Activated naive CD4-positive, alpha-beta T cell treated with anti-CD3 and anti-CD28 coated beads for 36 hours (primary cell): ENCODE measurements at regions of chr4 and their contacts with region 1.

Region 1: GRCh38 chr4:139030614-139031235 is 15.1 kb downstream of the NOCT start:
- DNase-seq: peak; percentile 90
- H3K4me3 Mint-ChIP-seq: no peak overlapping the region
- H3K27ac Mint-ChIP-seq: no peak overlapping the region
- H3K4me1 Mint-ChIP-seq: peaks cover 11% of the 10 kb centered on the region
- H3K27me3 Mint-ChIP-seq: no peaks in the 10 kb centered on the region

Region 2: DNA sequence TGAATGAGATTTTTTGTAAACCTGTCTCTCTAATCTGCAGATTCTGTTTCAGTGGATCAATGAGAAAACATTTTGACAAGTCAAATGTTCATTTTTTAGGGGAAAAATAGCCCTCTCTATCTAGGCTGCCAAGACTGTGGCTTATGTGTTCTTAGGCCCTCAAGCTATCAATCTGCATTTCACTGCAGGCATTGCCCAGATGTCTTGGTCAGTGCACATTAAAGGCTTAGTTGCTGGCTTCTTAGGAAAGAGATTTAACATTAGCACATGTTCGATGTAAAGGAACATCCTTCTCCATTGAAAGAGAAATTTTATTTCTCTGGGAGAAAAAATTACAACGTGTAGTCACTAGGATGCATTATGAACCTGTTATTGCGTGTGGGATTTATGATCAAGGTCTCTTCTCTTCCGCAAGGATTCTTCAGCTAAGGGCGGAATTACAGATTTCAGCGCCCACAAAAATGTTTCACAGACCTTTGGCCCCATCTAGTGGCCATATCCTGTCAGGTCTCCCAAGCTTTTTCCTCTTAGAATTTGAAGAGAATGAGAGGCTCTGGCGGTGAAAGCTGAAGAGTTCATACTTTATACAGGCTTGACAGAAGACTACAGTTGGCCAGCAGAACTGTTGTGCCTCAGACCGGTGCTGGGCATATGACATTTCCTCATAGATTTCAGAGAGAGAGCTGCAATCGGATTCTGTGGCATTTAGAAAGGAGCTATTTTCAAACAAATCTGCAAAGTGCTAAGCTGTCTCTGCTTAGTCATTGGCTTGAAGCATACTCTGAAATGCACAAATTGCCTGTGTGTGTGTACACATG is 159.8 kb before region 1 on chr4:
- CTCF ChIA-PET with region 1: no interaction called
- intact Hi-C with region 1: no loop called
- DNase-seq: peak; percentile 69
- H3K4me3 Mint-ChIP-seq: no peak overlapping the region
- H3K27ac Mint-ChIP-seq: no peak overlapping the region
- H3K4me1 Mint-ChIP-seq: no peaks in the 10 kb centered on the region
- H3K27me3 Mint-ChIP-seq: peaks cover 9% of the 10 kb centered on the region

Region 3: DNA sequence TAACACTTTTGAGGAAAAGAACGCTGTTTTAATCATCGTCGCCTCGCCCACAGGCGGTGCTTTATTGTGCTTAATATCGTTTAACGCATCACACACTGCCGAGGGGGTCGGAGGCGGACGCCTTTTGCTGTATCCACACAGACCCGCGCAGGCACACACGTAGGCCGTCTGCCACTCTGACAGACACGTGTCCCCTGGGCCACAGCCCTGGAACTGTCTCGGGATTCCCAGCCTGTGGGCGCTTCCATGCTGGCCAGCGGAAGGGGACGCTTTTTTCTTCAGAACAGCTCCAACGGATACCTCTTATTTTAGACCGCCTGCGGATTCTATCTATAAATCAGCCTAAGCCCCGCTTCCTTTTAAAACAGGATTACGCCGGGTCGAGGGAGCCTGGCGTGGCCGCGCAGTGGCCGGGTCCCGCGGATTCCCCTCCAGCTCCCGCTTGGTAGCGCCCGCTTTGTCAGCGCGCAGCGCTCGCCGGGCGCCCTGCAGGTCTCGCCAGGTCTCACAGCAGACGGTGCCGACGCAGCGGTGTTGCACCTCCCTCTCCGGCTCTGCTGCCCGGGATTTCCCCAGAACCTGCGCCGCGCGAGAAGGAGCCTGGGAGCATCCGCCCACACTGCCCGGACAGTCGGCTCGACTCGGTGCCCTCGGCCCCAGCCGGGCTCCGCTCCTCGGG is 15.3 kb before region 1 on chr4 and contains the start of gene NOCT:
- CTCF ChIA-PET with region 1: interaction called, 86 read pairs
- intact Hi-C with region 1: no loop called
- DNase-seq: peak; percentile 97
- H3K4me3 Mint-ChIP-seq: peak within 1 kb of the TSS; percentile 91
- H3K27ac Mint-ChIP-seq: peak within 1 kb of the TSS; percentile 96
- H3K4me1 Mint-ChIP-seq: peaks cover 48% of the 10 kb centered on the region
- H3K27me3 Mint-ChIP-seq: no peaks in the 10 kb centered on the region
- total RNA-seq, gene NOCT: 9.3 to 10.4 TPM

Region 4: DNA sequence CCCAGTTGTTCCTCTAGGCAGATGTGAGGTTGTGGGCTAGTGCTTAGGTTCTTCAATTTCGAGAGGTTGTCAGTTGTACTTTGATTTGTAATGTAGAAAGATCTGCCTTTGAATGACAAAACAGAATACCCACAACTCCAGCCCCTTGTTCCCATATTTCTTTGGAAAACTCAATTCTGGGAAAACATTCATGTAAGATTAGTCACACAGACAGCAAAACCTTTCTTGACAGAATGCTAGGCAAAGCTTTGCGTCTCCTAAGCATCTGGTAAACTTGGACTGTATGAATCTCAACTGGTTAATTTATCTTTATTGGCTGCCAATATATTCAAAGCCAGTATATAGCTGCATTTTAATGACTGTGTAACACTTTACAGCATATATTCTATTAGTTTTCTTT is 19.7 kb after region 1 on chr4:
- CTCF ChIA-PET with region 1: interaction called, 35 read pairs
- intact Hi-C with region 1: no loop called
- DNase-seq: no peak
- H3K4me3 Mint-ChIP-seq: no peak overlapping the region
- H3K27ac Mint-ChIP-seq: no peak overlapping the region
- H3K4me1 Mint-ChIP-seq: peaks cover 8% of the 10 kb centered on the region
- H3K27me3 Mint-ChIP-seq: no peaks in the 10 kb centered on the region

Region 5: DNA sequence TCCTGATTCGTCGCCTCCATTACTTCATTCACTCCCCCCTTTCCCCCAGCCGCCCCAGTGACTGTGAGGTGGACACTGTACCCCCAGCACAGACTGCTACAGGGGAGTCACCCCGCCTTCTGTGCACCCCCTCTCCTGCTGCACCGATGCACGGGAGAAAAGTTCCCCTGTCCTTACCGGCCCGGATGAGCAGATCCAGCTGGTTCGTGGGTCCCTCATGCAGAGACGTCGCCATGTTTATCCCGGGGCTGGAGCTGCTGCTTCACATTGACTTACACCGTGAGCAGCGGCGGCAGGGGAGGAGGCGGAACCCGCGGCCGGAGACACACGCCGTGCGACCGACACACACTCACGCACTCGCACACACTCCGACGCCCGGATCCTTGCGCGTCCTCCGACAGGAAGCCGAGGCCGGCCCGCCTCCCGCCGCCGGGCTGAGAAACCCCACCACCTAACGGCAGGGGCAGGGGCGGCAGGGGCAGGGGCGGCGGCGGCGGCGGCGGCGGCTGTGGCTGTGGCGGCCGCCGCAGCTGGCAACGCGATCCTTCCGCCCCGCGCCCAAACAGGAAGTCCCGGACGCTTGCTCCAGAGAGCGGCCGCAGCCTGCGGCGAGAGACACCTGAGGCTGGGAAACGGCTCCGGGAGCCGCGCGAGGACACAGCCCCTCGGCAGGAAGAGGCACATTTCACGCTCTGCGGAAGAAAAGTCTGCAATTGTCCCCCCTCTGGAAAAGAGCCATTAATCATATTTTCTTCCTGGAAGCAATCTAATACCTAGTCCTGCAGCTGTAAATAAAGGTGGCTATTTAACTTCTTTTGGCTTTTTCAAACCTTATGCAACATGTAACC is 53.5 kb after region 1 on chr4:
- CTCF ChIA-PET with region 1: interaction called, 28 read pairs
- intact Hi-C with region 1: loop called (anchors 1 kb)
- DNase-seq: peak; percentile 90
- H3K4me3 Mint-ChIP-seq: peak overlapping the region; percentile 99
- H3K27ac Mint-ChIP-seq: peak overlapping the region; percentile 99
- H3K4me1 Mint-ChIP-seq: peaks cover 30% of the 10 kb centered on the region
- H3K27me3 Mint-ChIP-seq: no peaks in the 10 kb centered on the region

Region 6: GRCh38 chr4:139229534-139230039 is 198.9 kb after region 1 on chr4:
- CTCF ChIA-PET with region 1: interaction called, 3 read pairs
- intact Hi-C with region 1: loop called (anchors 1 kb)
- DNase-seq: no peak
- H3K4me3 Mint-ChIP-seq: no peak overlapping the region
- H3K27ac Mint-ChIP-seq: no peak overlapping the region
- H3K4me1 Mint-ChIP-seq: no peaks in the 10 kb centered on the region
- H3K27me3 Mint-ChIP-seq: no peaks in the 10 kb centered on the region

Region 7: GRCh38 chr4:139416073-139416673 is 385.4 kb after region 1 on chr4:
- CTCF ChIA-PET with region 1: no interaction called
- intact Hi-C with region 1: loop called (anchors 2 kb)
- DNase-seq: peak; percentile 10
- H3K4me3 Mint-ChIP-seq: no peak overlapping the region
- H3K27ac Mint-ChIP-seq: no peak overlapping the region
- H3K4me1 Mint-ChIP-seq: peaks cover 14% of the 10 kb centered on the region
- H3K27me3 Mint-ChIP-seq: no peaks in the 10 kb centered on the region

Region 8: DNA sequence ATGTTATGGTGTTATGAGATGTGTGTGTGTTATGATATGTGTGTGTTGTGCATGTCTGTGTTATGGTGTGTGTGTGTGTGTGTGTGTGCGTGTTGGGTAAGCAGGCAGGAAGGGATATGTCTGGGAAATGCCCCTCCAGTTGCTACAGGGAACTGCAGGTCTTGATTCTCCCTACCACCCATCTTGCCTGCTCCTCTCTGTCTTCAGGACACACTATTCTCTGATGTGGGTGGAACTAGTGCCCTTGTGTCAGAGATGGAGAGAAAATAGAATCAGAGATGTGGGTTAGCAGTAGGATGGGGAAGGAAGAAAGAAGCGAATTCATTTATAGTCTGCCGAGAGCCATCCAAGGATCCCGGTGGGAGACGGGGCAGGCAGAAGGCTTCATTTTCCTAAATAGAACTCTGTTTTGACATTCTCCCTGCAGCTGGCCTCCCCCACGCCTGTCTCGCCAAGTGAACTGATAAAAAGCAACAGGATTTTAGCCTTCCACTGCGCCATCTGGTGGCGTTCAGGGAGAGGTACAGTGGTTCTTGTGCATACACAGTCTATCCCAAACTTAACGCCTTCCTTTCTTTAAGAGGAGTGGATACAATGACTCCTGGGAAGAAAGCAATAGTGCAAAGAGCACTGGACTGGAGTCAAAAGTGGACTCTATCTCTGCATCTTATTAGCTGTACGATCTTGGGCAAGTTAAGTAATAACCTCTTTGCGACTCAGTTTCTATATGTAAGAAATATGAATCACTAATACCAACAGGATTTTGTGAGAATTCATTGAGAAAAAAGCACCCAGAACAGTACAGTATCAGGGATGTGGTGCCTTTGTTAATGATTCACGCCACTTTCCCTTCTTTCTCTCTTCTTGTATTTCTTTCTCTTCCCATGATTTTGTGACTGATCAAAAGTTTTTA is 620.8 kb after region 1 on chr4:
- CTCF ChIA-PET with region 1: no interaction called
- intact Hi-C with region 1: loop called (anchors 1 kb)
- DNase-seq: peak; percentile 81
- H3K4me3 Mint-ChIP-seq: no peak overlapping the region
- H3K27ac Mint-ChIP-seq: no peak overlapping the region
- H3K4me1 Mint-ChIP-seq: peaks cover 3% of the 10 kb centered on the region
- H3K27me3 Mint-ChIP-seq: peaks cover 2% of the 10 kb centered on the region